Activated CD4-positive, alpha-beta T cell treated with anti-CD3 and anti-CD28 coated beads, Interleukin-2, amount 10 ng/mL, durations not matched to agents 24 days and 14 days (primary cell): ENCODE measurements at regions of chr17 and their contacts with region 1.

Region 1: GRCh38 chr17:78250891-78251794 is 19.7 kb downstream of the TMEM235 start:
- DNase-seq: peak; percentile 96
- H3K4me3 Mint-ChIP-seq: peak overlapping the region; percentile 85
- H3K27ac Mint-ChIP-seq: peak overlapping the region; percentile 84
- H3K4me1 Mint-ChIP-seq: peaks cover 40% of the 10 kb centered on the region
- H3K27me3 Mint-ChIP-seq: no peaks in the 10 kb centered on the region

Region 2: DNA sequence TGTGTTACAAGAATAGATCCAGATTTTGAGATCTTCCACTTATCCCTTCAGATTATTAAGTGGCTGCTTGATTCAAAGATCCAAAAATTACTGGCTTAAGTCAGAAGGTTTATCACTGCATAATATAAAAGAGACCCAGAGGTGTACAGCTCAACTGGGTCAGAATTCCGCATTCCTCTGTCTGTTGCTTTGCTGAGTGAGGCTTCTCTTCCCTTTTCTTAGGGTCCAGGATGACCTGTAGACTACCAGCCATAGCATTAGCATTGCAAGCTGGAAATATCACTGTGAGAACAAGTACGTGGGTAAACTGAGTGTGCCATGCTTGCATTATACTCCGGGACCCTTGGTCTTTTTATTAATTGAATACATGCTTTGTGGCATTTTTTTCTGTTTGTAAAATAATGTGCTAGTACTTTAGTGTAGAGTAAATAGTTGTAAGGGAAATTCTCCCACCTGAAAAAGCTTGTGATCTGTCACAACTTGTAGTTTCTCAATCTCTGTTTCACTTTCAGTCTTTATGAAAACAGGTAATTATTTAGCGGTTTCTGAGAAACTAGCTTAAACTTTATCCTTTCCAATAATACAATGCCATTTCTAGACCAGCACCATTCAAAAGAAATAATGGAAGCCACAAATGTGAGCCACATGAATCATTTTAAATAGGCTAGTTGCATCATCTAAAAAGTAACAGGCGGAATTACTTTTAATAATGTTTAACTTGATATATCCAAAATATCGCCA is 231.0 kb before region 1 on chr17:
- intact Hi-C with region 1: loop called (anchors 5 kb)
- DNase-seq: no peak
- H3K4me3 Mint-ChIP-seq: peak overlapping the region; percentile 68
- H3K27ac Mint-ChIP-seq: peak overlapping the region; percentile 68
- H3K4me1 Mint-ChIP-seq: peaks cover 26% of the 10 kb centered on the region
- H3K27me3 Mint-ChIP-seq: no peaks in the 10 kb centered on the region

Region 3: GRCh38 chr17:78112518-78113226 is 138.5 kb before region 1 on chr17:
- intact Hi-C with region 1: loop called (anchors 2 kb)
- DNase-seq: peak; percentile 94
- H3K4me3 Mint-ChIP-seq: no peak overlapping the region
- H3K27ac Mint-ChIP-seq: no peak overlapping the region
- H3K4me1 Mint-ChIP-seq: peaks cover 30% of the 10 kb centered on the region
- H3K27me3 Mint-ChIP-seq: no peaks in the 10 kb centered on the region

Region 4: DNA sequence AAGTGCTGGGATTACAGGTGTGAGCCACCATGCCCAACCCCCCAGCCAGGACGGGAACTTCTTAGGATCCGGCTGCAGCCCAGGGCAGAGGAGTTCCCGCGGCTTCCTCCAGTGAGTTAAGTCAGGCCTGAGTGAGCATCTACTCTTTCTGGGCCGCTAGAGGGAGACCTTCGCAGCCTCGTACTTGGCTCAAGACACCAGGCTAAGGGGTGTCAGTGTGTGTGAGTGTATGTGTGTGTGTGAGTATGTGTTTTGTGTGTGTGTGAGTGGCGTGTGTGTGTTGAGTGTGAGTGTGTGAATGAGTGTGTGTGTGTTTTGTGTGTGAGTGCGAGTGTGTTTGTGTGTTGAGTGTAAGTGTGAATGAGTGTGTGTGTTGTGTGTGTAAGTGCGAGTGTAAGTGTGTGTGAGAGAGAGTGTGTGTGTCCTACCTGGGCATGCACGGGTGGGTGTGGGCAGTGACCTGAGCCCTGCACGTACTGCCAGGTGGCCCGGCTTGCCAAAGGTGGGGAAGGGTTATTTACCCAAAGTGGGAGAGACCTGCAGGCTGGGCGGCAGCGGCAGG is 38.7 kb after region 1 on chr17:
- intact Hi-C with region 1: loop called (anchors 5 kb)
- DNase-seq: peak; percentile 92
- H3K4me3 Mint-ChIP-seq: no peak overlapping the region
- H3K27ac Mint-ChIP-seq: no peak overlapping the region
- H3K4me1 Mint-ChIP-seq: peaks cover 7% of the 10 kb centered on the region
- H3K27me3 Mint-ChIP-seq: no peaks in the 10 kb centered on the region

Region 5: DNA sequence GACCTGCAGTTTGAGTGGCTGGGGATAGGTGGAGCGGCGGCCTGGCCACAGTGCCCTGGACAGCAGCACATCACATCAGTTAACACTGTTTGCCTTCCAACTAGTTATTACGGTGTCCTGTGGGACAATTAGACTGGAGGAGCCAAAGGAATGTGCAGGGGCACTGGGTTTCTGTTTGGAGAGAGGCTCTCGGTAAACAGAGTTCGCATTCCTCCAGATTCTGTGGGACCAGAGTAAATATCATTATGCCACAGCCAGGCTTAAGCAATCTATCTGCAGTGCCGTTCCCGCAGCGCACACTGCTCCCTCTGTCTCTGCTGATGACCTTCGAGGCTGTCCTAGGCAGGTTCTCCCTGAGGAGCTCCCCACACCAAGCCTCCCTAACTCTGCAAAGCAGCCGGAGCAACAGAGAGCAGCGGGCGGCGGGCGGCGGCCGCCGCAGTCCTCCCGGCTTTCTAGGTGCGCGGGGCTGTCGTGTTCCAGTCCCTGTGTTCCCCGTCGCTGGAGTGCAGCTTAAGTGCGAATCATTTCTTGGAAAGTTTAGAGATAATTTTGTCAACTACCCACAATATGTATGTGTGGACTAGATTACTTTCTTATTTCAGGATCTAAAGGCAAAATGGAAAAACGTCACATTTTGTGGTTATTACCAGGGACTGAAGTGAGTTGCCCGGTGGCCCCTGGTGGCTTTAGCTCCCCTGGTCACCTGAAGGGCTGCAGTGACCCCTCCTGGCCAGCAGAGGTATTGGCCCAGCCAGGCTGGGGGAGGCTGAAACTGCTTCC is 170.5 kb after region 1 on chr17:
- intact Hi-C with region 1: loop called (anchors 5 kb)
- DNase-seq: peak; percentile 93
- H3K4me3 Mint-ChIP-seq: no peak overlapping the region
- H3K27ac Mint-ChIP-seq: peak overlapping the region; percentile 77
- H3K4me1 Mint-ChIP-seq: peaks cover 41% of the 10 kb centered on the region
- H3K27me3 Mint-ChIP-seq: no peaks in the 10 kb centered on the region

Region 6: DNA sequence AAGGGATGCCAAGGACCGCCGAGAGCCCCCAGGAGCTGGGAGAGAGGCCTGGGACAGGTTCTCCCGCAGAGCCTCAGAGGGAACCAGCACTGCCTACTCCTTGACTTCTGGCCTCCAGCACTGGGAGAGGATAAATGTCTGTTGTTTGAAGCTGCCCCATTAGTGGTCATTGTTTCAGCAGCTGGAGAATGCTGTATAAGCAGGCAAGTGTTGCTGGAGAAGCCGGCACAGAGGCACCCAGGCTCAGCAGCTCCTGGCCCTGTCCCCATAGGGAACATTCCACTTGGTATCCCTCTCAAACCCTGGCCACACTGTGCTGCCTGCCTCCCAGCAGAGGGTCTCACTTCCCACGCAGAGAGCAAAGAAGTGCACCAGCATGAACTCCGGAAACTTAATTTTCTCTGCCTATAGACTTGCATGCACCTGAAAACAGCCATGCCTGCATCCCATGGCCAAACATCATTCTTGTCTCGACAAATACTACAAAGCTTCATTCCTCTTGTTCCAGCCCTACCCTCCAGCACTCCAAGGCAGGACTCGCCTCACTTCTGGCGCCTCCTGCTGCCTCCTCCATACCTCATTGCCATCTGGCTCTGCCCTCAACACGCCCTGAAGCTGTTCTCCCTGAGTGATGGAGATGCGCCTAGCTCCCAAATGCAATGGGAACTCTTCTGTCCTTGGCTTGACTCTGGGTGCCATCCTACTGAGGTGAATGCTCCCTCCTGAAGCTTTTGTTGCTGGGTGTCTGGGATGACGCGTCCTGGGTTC is 237.9 kb after region 1 on chr17:
- intact Hi-C with region 1: no loop called
- DNase-seq: no peak
- H3K4me3 Mint-ChIP-seq: no peak overlapping the region
- H3K27ac Mint-ChIP-seq: no peak overlapping the region
- H3K4me1 Mint-ChIP-seq: peaks cover 7% of the 10 kb centered on the region
- H3K27me3 Mint-ChIP-seq: peaks cover 2% of the 10 kb centered on the region